Left ventricle myocardium inferior (tissue), 1 donor: ENCODE measurements at regions of chr4 and their contacts with region 1.

Region 1: GRCh38 chr4:129641179-129641578 is 545.2 kb downstream of the C4orf33 start:
- DNase-seq: peak; percentile 20
- H3K4me3 ChIP-seq: no peak overlapping the region
- H3K27ac ChIP-seq: no peak overlapping the region
- H3K4me1 ChIP-seq: no peaks in the 10 kb centered on the region
- H3K27me3 ChIP-seq: peaks cover 8% of the 10 kb centered on the region
- CTCF ChIP-seq: peak; percentile 91

Region 2: DNA sequence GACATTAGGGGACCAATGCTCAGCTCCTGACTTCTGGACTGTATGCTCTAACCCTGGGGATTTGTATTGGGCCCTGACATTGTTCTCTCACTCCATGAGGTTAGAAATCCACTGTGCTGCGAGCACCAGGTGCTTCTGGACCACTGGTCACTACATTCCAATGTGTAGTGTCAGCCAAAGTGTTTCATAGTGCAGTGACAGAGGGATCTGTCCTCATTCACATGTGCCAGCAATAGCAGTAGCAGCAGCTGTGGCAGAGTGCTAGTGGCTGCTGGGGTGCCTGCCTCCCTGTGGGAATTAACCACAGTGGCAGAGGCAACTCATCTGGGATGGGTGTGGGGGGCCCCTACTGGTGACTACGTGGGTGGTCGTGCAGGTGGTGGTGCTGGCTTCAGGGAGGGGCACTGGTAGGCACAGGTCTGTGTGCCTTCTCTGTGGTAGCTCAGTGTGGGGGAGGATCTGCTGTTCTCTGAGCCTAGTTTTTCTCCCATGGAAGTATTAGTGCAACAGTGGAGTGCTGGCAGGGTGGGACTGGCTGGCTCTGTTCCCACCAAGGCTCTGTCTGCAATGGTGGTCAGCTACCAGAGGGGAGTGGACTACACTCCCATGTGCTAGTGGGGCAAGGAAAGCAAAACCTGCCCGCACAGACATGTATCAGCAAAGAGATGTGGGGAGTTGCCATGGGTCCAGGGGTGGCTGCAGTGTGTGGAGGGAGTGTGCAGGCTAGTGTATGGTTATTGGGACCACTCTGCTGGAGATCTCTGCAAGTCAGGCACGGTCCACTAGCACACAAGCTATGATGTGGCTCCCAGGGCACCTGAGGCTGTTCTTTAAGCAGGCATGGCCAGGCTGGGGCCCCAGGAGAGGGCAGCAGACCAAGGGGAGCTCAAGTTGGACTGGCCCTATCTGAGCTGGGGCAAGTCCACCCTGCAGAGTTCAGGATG is 626.3 kb before region 1 on chr4:
- intact Hi-C with region 1: no loop called
- DNase-seq: no peak
- H3K4me3 ChIP-seq: no peak overlapping the region
- H3K27ac ChIP-seq: no peak overlapping the region
- H3K4me1 ChIP-seq: no peaks in the 10 kb centered on the region
- H3K27me3 ChIP-seq: no peaks in the 10 kb centered on the region
- CTCF ChIP-seq: no peak

Region 3: GRCh38 chr4:129362674-129363274 is 278.4 kb before region 1 on chr4:
- intact Hi-C with region 1: loop called (anchors 2 kb)
- DNase-seq: peak; percentile 16
- H3K4me3 ChIP-seq: no peak overlapping the region
- H3K27ac ChIP-seq: no peak overlapping the region
- H3K4me1 ChIP-seq: no peaks in the 10 kb centered on the region
- H3K27me3 ChIP-seq: peaks cover 62% of the 10 kb centered on the region
- CTCF ChIP-seq: peak; percentile 86

Region 4: GRCh38 chr4:129403848-129404247 is 237.3 kb before region 1 on chr4:
- intact Hi-C with region 1: no loop called
- DNase-seq: no peak
- H3K4me3 ChIP-seq: no peak overlapping the region
- H3K27ac ChIP-seq: no peak overlapping the region
- H3K4me1 ChIP-seq: no peaks in the 10 kb centered on the region
- H3K27me3 ChIP-seq: no peaks in the 10 kb centered on the region
- CTCF ChIP-seq: no peak

Region 5: GRCh38 chr4:129526814-129527213 is 114.4 kb before region 1 on chr4:
- intact Hi-C with region 1: loop called (anchors 5 kb)
- DNase-seq: no peak
- H3K4me3 ChIP-seq: no peak overlapping the region
- H3K27ac ChIP-seq: no peak overlapping the region
- H3K4me1 ChIP-seq: no peaks in the 10 kb centered on the region
- H3K27me3 ChIP-seq: no peaks in the 10 kb centered on the region
- CTCF ChIP-seq: peak; percentile 66

Region 6: GRCh38 chr4:129747756-129748155 is 106.6 kb after region 1 on chr4:
- intact Hi-C with region 1: no loop called
- DNase-seq: no peak
- H3K4me3 ChIP-seq: no peak overlapping the region
- H3K27ac ChIP-seq: no peak overlapping the region
- H3K4me1 ChIP-seq: no peaks in the 10 kb centered on the region
- H3K27me3 ChIP-seq: no peaks in the 10 kb centered on the region
- CTCF ChIP-seq: no peak

Region 7: DNA sequence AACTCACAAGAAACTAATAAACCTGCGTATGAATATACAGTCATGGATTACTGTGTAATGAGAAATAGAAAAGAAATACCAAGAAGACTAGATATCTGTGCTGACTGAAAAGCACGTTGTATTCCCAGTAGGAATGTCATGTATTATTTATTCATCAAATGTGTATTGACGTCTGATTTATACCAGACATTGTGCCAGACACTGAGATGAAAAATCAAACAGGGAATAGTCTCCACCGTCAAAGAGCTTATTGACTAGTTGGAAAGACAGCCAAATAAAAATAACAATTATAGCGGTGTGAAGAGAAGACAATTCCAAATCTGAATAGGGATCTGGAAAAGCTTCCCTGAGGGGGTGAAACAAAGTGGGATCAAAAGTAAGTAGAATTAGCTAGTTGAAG is 142.4 kb after region 1 on chr4:
- intact Hi-C with region 1: no loop called
- DNase-seq: no peak
- H3K4me3 ChIP-seq: no peak overlapping the region
- H3K27ac ChIP-seq: no peak overlapping the region
- H3K4me1 ChIP-seq: no peaks in the 10 kb centered on the region
- H3K27me3 ChIP-seq: no peaks in the 10 kb centered on the region
- CTCF ChIP-seq: no peak